Gastrocnemius medialis (tissue), 4 donors: ENCODE measurements at regions of chr2 and their contacts with region 1.

Region 1: GRCh38 chr2:151691631-151692030 is 42.6 kb downstream of the NEB start:
- DNase-seq: no peak
- ATAC-seq: no peak
- H3K4me3 ChIP-seq: no peak overlapping the region
- H3K27ac ChIP-seq: peak overlapping the region; percentile 14 to 48 (median 42)
- H3K4me1 ChIP-seq: no peaks in the 10 kb centered on the region
- H3K27me3 ChIP-seq: no peaks in the 10 kb centered on the region
- CTCF ChIP-seq: no peak
- POLR2A ChIP-seq: no peak

Region 2: DNA sequence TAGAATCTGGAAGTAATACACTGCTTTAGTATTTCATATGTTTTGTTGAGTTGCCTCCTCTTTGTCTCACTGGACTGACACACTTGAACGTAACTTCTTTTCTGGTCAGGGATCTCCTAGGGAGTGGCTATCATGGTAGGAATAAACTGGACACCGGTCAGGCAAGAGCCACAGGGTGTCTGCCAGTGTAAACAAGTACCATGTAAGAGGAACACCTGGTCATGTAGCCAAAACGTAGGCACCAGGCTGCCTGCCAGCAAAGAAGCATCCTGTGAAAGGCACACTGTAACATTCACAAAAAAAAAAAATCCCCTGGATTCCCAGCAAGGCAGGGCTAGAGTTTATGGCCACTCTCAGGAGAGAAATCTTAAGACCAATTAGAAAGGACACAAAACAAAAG is 831.3 kb before region 1 on chr2:
- in situ Hi-C with region 1: no loop called
- intact Hi-C with region 1: no loop called
- DNase-seq: no peak
- ATAC-seq: no peak
- H3K4me3 ChIP-seq: no peak overlapping the region
- H3K27ac ChIP-seq: no peak overlapping the region
- H3K4me1 ChIP-seq: no peaks in the 10 kb centered on the region
- H3K27me3 ChIP-seq: no peaks in the 10 kb centered on the region
- CTCF ChIP-seq: no peak
- POLR2A ChIP-seq: no peak

Region 3: GRCh38 chr2:151819920-151820319 is 128.3 kb after region 1 on chr2:
- in situ Hi-C with region 1: loop called in 1 of 4 experiments (anchors 10 kb)
- intact Hi-C with region 1: no loop called
- DNase-seq: no peak
- ATAC-seq: no peak
- H3K4me3 ChIP-seq: no peak overlapping the region
- H3K27ac ChIP-seq: no peak overlapping the region
- H3K4me1 ChIP-seq: peaks cover 33 to 36% of the 10 kb centered on the region in 2 donors
- H3K27me3 ChIP-seq: no peaks in the 10 kb centered on the region
- CTCF ChIP-seq: no peak
- POLR2A ChIP-seq: no peak

Region 4: GRCh38 chr2:152367547-152368390 is 676.1 kb after region 1 on chr2:
- in situ Hi-C with region 1: no loop called
- intact Hi-C with region 1: no loop called
- DNase-seq: no peak
- ATAC-seq: no peak
- H3K4me3 ChIP-seq: no peak overlapping the region
- H3K27ac ChIP-seq: no peak overlapping the region
- H3K4me1 ChIP-seq: peaks cover 24 to 34% of the 10 kb centered on the region in 2 donors
- H3K27me3 ChIP-seq: no peaks in the 10 kb centered on the region
- CTCF ChIP-seq: no peak
- POLR2A ChIP-seq: no peak